ENCODE measurements at regions of chr9 and their contacts with region 1.

Region 1: DNA sequence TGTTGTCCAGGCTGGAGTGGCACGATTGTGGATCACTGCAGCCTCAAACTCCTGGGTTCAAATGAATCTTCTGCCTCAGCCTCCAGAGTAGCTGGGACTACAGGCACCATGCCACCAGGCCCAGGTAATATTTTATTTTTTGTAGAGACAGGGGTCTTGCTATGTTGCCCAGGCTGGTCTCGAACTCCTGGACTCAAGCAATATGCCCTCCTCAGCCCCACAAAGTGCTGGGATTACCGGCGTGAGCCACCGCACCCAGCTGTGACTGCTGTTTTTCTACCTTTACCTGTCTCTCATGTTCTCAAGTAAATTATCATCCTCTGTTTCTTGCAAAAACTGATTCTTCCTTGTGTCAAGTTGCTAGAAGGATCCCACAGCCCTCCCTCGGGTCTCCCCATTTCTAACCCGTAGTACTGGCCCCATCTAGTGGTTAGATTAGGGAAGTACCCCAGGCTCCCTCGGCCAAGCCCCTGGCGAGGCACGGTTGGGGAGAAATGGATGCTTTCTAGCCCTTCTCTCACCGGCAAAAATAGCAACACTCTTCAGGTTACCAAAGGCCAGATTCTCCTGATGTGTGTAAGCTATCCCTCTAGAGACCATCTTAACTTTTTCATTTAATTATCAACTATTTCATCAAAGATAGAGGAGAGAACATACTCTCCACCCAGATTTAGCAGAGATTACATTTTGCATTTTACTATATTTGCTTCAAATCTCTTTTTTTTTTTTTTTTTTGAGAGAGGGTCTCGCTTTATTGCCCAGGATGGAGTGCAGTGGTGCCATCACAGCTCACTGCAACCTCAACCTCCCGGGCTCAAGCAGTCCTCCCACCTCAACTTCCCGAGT is 19.2 kb upstream of the TOR1B start:
- DNase-seq: peak; percentile 33 to 75
- ATAC-seq: peak; percentile 83 to 96 (median 93)
- H3K4me3 ChIP-seq: no peak overlapping the region
- H3K27ac ChIP-seq: no peak overlapping the region
- H3K4me1 ChIP-seq: peaks cover 0 to 6% (median 0%) of the 10 kb centered on the region in 9 donors
- H3K27me3 ChIP-seq: peaks cover 0 to 17% (median 8%) of the 10 kb centered on the region in 7 donors
- CTCF ChIP-seq: peak; percentile 89 to 94 (median 92)

Region 2: DNA sequence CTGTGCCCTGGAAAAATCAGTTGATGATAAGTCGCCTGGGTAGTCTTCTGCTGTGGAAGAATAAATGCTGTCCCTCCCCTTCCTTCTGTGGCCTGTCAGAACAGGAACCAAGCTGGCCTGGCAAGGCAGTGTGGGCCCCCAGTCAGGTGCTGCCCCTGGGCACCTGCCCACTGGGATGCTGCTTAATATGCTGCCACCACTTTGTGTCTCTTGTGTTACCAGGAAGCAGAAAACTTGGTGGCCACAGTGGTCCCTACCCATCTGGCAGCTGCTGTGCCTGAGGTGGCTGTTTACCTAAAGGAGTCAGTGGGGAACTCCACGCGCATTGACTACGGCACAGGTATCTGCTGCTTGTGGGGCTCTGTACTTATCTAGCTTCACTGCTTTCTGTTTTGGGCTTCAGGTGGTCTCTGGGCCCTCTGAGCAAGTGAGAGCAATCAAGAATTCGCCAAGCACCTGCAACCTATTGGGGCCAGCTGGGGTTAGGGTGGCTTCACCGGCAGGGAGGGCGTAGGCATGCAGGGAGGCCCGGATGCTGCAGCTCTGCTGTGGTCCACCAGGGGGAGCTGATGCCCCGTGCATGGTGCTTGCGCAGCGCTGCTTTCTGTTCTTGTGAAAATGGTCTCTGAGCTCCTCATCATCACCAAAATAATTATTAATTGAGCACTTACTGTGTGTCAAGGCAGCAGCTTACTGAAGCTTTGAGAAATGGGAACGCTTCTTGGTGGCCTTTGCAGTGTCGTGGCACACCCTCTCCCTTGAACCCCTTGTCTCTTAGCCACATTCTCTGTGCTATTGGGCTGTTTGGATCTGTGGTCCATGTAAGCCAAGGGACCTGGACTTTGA is 652.2 kb before region 1 on chr9:
- intact Hi-C with region 1: loop called in 8 of 10 experiments (anchors 2 to 10 kb)
- DNase-seq: peak; percentile 81 to 82
- ATAC-seq: peak; percentile 80 to 90 (median 86)
- H3K4me3 ChIP-seq: no peak overlapping the region
- H3K27ac ChIP-seq: peak overlapping the region in 2 of 10 donors; percentile 2 to 28
- H3K4me1 ChIP-seq: peaks cover 0 to 20% (median 6%) of the 10 kb centered on the region in 9 donors
- H3K27me3 ChIP-seq: no peaks in the 10 kb centered on the region
- CTCF ChIP-seq: peak; percentile 95 to 99 (median 98)

Region 3: GRCh38 chr9:129641746-129642513 is 141.8 kb before region 1 on chr9 and contains the start of gene ASB6:
- intact Hi-C with region 1: loop called (anchors 1 to 5 kb)
- DNase-seq: peak; percentile 98 to 99
- ATAC-seq: peak; percentile 94 to 98 (median 96)
- H3K4me3 ChIP-seq: peak within 1 kb of the TSS; percentile 76 to 100 (median 98)
- H3K27ac ChIP-seq: peak within 1 kb of the TSS; percentile 27 to 92 (median 84)
- H3K4me1 ChIP-seq: peaks cover 17 to 29% (median 24%) of the 10 kb centered on the region in 9 donors
- H3K27me3 ChIP-seq: no peaks in the 10 kb centered on the region
- CTCF ChIP-seq: peak; percentile 96 to 100 (median 99)
- total RNA-seq, gene ASB6: 6.2 to 11.8 (median 9.0) TPM

Region 4: DNA sequence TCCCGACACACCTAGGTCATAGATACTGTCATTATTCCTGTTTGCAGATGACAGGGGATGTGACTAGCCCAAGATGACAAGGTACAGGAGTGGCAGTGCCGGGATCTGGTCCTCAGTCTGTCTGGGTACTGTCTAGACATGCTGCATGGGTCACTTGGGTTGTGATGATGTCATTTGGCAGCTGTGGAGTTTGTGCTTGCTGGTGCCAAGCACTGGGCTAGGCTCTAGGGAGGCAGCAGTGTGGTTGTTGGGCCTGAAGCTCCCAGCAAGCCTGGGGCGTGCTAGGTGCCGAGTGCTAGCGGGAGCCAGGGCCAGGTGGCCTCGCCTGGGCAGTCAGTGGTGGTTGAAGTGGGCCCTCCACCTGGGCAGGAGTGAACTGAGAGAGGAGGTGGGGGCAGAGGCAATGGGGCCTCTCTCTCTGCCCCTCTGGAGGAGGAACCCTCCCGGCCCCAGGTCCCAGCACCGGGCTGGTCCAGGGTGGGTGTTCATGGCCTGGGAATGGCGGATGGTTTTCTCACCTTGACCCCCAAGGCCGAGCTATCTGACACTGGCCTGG is 133.0 kb before region 1 on chr9:
- intact Hi-C with region 1: loop called in 3 of 10 experiments (anchors 2 to 5 kb)
- DNase-seq: no peak
- ATAC-seq: no peak
- H3K4me3 ChIP-seq: no peak overlapping the region
- H3K27ac ChIP-seq: no peak overlapping the region
- H3K4me1 ChIP-seq: peaks cover 0 to 11% (median 0%) of the 10 kb centered on the region in 9 donors
- H3K27me3 ChIP-seq: no peaks in the 10 kb centered on the region
- CTCF ChIP-seq: no peak

Region 5: DNA sequence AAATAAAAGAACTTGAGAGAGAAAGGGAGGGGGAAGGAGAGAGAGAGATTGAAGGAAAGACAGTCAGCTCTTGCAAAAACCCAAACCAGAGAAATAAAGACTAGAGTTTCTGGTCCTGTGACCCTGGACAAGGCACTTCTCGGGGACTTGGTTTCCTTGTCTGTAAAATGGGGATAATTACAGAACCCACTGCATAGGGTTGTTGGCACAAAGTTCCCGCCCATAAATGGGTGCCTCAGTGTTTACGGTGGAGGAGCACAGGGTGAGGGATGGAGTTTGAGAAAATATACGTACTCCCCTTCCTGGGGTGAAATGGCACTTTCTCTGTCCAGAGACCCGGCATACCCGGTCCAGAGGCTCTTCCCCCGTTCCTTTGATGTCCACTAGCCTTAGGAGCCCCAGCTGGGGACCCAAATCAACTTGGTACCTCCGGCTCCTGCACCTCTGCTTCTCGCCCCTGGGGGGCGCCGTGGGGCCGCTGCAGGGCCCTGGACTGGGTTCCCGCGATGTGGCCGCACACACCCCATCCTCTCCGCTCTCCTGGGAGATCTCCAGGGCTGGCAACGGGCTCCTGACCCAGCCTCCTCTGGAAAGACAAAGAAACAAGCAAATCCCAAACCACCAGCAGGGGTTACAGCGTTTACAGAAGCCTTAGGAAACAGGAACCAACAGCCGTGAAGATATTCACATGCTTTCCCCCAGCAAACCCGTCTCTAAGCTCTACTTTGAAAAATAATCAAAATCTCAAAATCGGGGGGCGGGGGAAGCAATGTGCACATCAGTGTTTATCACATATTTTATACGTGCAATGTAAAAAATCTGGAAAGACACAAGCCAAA is 57.2 kb before region 1 on chr9:
- intact Hi-C with region 1: loop called in 1 of 10 experiments (anchors 1 kb)
- DNase-seq: peak; percentile 78 to 79
- ATAC-seq: peak; percentile 88 to 94 (median 92)
- H3K4me3 ChIP-seq: peak overlapping the region in 5 of 10 donors; percentile 17 to 28 (median 18)
- H3K27ac ChIP-seq: peak overlapping the region in 4 of 10 donors; percentile 42 to 53 (median 48)
- H3K4me1 ChIP-seq: peaks cover 0 to 24% (median 16%) of the 10 kb centered on the region in 9 donors
- H3K27me3 ChIP-seq: peaks cover 0 to 9% (median 0%) of the 10 kb centered on the region in 7 donors
- CTCF ChIP-seq: peak; percentile 80 to 95 (median 92)

Region 6: GRCh38 chr9:129737479-129738274 is 46.1 kb before region 1 on chr9:
- intact Hi-C with region 1: loop called (anchors 1 to 5 kb)
- DNase-seq: peak; percentile 85 to 87
- ATAC-seq: peak; percentile 88 to 95 (median 92)
- H3K4me3 ChIP-seq: peak overlapping the region; percentile 36 to 84 (median 65)
- H3K27ac ChIP-seq: peak overlapping the region in 9 of 10 donors; percentile 29 to 88 (median 68)
- H3K4me1 ChIP-seq: peaks cover 0 to 13% (median 5%) of the 10 kb centered on the region in 9 donors
- H3K27me3 ChIP-seq: peaks cover 0 to 14% (median 5%) of the 10 kb centered on the region in 7 donors
- CTCF ChIP-seq: peak; percentile 96 to 99 (median 97)

Region 7: DNA sequence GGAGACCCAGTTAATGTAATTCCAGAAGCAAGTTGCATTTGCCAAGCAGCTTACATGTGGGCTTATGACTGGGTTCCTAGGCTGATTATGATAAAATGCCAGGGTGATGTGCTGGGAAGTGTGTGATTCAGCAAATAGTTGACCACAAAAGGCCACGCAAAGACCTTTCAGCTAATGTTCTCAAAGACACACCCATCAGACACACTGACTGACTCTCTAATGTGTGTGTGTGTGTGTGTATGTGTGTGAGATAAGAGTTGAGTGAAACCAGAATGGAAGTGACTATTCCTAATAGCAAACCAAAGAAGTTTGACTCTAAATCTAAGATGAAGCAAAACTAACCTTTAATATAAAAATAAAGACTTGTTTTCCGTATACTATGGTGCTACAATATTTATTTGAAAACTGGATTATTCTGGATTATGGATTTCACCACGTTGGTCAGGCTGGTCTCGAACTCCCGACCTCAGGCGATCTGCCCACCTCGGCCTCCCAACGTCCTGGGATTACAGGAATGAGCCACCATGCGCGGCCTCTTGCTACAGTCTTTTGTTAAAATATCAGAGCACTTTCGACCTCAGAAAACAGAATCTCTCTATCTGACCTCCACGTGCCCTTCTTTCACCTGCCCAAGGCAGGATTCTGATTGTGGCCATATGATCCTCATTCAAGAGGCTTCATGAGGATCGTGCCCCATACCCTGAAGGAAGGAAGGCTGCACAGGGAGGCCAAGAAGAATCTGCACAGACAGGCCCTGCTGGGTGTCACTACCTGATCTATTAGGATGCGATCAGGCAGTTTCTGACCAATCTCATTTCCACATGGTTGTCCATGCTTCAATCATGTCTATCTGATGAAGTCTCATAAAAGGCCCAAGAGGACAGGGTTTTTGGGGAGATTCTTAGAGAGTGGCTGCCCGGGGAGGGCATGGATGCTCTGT is 127.2 kb after region 1 on chr9:
- intact Hi-C with region 1: no loop called
- DNase-seq: no peak
- ATAC-seq: peak in 1 of 8 donors; percentile 68
- H3K4me3 ChIP-seq: no peak overlapping the region
- H3K27ac ChIP-seq: peak overlapping the region in 1 of 10 donors; percentile 4
- H3K4me1 ChIP-seq: peaks cover 0 to 13% (median 0%) of the 10 kb centered on the region in 9 donors
- H3K27me3 ChIP-seq: no peaks in the 10 kb centered on the region
- CTCF ChIP-seq: no peak